ENCODE measurements at regions of chr18 and their contacts with region 1.

Region 1: DNA sequence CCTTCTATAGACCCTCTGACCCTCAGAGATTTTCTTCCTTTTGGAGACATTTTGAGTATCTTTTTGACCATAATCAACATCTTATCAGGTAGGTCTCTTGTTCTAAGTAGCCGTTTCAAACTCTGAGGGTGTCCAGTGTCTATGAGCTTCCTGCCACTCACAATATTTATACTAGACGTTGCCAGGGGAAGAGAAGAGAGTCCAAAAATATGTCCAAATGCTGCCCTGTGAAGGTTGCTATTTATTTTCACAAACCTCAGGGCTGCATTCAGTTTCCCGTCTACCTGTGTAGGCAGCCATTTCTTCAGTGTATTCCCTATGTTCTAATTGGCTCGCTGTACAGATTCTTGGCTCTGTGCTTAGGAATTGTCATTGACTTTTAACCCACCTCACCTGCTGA is 986 bp upstream of the DSG1 start:
- DNase-seq: no peak
- H3K4me3 ChIP-seq: no peak overlapping the region
- H3K27ac ChIP-seq: no peak overlapping the region
- H3K27me3 ChIP-seq: peaks cover 0 to 3% (median 0%) of the 10 kb centered on the region in 45 donors
- CTCF ChIP-seq: no peak

Region 2: GRCh38 chr18:31301201-31301655 is 15.7 kb before region 1 on chr18:
- intact Hi-C with region 1: loop called in 1 of 2 experiments (anchors 1 kb)
- DNase-seq: no peak
- H3K4me3 ChIP-seq: no peak overlapping the region
- H3K27ac ChIP-seq: no peak overlapping the region
- H3K27me3 ChIP-seq: no peaks in the 10 kb centered on the region
- CTCF ChIP-seq: no peak

Measured in dorsolateral prefrontal cortex (tissue), 120 donors.